Endothelial cell of umbilical vein (primary cell): ENCODE measurements at regions of chr1 and their contacts with region 1.

Region 1: GRCh38 chr1:145891587-145892485 is 6.2 kb upstream of the ANKRD35 start:
- DNase-seq: peak; percentile 99
- H3K4me3 ChIP-seq: peak overlapping the region in 1 of 3 experiments; percentile 6
- H3K27ac ChIP-seq: peak overlapping the region; percentile 95
- H3K4me1 ChIP-seq: peaks cover 31% of the 10 kb centered on the region
- H3K27me3 ChIP-seq: no peaks in the 10 kb centered on the region
- CTCF ChIP-seq: peak; percentile 91 to 99
- POLR2A ChIP-seq: peak; percentile 71

Region 2: DNA sequence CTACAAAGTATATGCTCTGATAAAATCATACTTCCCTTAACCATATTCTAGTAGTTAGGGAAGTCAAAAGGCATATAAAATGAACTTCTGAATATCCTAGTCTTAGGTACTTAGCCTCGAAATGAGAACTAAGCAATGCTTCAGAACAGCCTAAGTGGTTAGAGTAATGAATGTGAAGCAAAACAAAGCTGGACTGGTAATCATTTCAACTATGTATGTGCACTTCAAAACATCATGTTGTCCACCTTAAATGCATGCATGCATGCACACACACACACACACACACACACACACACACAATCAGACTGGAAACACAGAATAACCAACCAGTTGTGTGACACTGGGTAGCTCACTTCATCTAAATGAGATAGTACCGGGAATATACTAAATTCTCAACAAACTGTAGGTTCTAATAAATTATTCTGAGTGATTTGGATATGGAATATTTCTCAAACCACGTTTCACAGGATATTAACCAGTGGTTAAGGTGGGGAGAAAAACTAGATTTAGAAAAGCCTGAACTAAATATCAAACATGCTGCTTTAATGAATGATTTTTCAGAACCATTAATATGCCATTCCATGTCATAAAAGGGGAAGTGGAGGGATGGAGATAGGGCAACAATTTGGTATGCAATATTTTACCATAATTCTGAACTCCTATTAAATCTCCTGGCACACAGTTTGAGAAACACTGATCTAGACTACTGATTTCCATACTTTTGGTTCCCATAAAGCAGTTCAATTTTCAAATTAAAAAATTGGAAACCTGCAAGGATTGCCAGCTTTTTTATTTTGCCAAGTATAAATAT is 87.4 kb before region 1 on chr1:
- CTCF ChIA-PET with region 1: no interaction called
- POLR2A ChIA-PET with region 1: no interaction called
- dilution Hi-C with region 1: no loop called
- intact Hi-C with region 1: no loop called
- DNase-seq: no peak
- H3K4me3 ChIP-seq: no peak overlapping the region
- H3K27ac ChIP-seq: no peak overlapping the region
- H3K4me1 ChIP-seq: no peaks in the 10 kb centered on the region
- H3K27me3 ChIP-seq: no peaks in the 10 kb centered on the region
- CTCF ChIP-seq: no peak
- POLR2A ChIP-seq: no peak

Region 3: DNA sequence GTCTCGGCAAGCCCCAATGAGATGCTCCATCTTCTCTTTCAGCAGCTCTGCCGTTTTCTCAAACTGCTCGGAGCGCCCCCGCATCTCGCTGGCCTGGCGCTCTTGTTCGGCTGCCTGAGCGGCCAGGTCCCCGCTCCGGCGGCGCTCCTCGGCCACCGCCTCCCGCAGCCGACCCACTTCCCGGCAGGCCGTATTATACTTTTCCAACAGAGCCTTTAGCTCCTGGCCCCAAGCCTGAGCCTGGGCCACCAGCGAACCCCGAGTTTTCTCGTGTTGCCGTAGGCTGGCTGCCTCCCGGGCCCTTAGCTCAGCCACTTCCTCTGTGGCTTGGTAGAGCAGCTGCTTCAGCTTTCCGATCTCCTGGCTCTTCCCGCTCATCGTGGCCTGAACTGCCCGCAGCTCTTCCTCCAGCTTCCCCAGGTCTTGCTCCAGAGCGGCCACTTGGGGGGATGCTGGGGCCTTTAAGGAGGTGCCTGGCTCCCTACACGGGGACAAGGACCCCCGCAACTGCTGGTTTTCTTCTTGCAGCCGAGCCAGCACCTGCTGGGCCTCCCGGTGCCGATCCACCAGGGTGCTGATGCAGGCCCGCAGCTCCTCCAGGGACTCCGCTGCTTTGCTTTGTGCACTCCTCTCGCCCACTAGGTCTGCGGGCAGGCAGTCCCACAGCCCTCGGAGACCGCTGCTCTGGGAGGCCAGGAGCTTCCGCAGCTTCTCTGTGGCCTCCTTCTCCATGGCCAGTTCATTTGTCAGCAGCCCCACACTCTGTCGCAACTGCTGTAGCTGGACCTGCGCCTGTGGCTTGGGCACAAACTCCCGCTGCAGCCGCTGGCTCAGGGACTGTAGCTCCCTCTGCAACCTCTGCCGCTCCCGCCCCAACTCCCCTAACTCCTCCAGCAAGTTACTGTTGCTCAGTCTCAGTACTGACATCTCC is 19.6 kb before region 1 on chr1:
- CTCF ChIA-PET with region 1: interaction called, 18 read pairs
- POLR2A ChIA-PET with region 1: interaction called, 3 read pairs
- dilution Hi-C with region 1: no loop called
- intact Hi-C with region 1: no loop called
- DNase-seq: peak; percentile 37
- H3K4me3 ChIP-seq: peak overlapping the region in 1 of 3 experiments; percentile 35
- H3K27ac ChIP-seq: no peak overlapping the region
- H3K4me1 ChIP-seq: peaks cover 8% of the 10 kb centered on the region
- H3K27me3 ChIP-seq: peaks cover 0 to 3% of the 10 kb centered on the region in 2 experiments
- CTCF ChIP-seq: no peak
- POLR2A ChIP-seq: no peak

Region 4: DNA sequence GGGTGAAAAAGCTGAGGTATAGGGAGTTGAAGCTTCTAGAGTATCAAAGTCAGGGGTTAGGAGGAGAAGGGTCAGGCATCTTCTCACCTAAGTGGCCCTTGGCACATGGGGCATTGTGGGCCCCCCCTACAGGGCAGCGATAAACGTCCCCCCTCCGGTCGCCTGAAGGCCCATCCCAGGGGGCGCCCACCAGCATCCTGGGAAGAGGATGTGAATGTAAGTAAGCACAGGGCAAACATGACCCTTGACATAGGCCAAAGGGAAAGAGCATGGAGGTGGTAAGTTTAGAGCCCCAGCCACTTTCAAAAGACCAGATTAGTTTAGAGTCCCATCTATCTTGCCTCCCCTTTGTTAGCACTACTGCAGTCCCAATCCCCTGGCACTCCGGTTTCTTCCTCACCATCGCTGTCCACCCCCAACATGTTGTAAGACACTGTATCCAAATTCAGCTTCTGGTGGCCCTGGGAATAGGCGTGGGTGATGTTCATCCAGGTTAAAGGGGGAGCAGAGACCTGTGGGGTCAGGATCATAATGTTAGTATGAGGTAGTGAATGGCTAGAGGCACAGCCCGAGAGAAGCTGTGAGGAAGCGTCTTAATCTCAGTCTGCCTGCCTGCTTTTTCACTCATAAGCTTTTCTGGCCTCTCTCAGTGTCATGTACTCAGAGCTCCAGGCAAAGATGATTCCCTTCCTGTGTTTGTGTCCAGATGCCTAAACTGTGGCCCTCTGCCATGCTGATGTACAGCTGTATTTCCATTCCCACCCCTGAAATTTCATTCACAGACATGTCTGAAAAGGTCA is 15.3 kb after region 1 on chr1:
- CTCF ChIA-PET with region 1: interaction called, 280 read pairs
- POLR2A ChIA-PET with region 1: interaction called, 23 read pairs
- dilution Hi-C with region 1: no loop called
- intact Hi-C with region 1: loop called (anchors 1 kb)
- DNase-seq: peak; percentile 59
- H3K4me3 ChIP-seq: no peak overlapping the region
- H3K27ac ChIP-seq: peak overlapping the region; percentile 39
- H3K4me1 ChIP-seq: peaks cover 25% of the 10 kb centered on the region
- H3K27me3 ChIP-seq: no peaks in the 10 kb centered on the region
- CTCF ChIP-seq: no peak
- POLR2A ChIP-seq: no peak

Region 5: DNA sequence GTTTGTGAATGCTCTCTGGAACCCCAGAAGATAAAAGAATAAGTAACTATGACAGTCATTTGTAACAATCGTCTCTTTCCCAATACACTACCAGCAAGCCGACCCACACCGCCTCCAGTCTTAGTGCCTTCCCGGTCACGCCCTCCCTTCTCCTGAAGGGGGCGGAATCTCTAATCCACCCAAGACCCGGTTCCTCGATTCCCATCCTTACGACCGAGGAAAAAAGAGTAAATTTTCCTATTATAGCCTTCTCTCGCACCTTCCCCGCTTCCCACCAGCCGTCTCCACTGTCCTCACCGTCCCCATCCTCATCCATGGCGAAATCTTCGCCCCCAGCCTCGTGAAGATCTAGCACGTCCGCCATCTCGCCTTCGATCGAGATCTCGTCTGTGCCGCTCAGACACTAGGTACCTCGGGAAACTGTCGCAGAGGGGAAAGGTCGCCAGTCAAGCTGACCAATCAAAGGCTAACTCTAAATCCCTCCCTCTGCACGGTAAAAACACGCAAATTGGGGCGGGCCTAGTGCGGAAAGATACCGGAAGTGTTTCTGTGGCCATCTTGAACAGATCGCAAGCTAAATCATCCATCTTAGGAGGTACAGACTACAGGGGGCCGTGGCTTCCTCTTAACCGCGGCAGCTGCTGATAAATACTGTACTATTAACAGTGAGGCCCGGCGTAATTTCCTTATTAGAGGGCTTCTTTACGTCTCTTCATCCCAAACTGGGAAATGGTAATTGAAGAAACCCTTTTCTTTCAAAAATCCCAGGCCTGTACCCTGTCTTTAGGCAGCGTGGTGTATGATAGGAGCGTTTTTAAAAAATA is 35.4 kb after region 1 on chr1 and contains the start of gene RBM8A:
- CTCF ChIA-PET with region 1: interaction called, 23 read pairs
- POLR2A ChIA-PET with region 1: interaction called, 3 read pairs
- dilution Hi-C with region 1: no loop called
- intact Hi-C with region 1: loop called (anchors 5 kb)
- DNase-seq: peak; percentile 99
- H3K4me3 ChIP-seq: peak within 1 kb of the TSS; percentile 80 to 89 (median 80)
- H3K27ac ChIP-seq: peak within 1 kb of the TSS; percentile 94
- H3K4me1 ChIP-seq: peaks cover 8% of the 10 kb centered on the region
- H3K27me3 ChIP-seq: no peaks in the 10 kb centered on the region
- CTCF ChIP-seq: peak; percentile 64 to 70
- POLR2A ChIP-seq: peak; percentile 88
- total RNA-seq, gene RBM8A: 194 and 200 TPM in 2 replicates

Region 6: DNA sequence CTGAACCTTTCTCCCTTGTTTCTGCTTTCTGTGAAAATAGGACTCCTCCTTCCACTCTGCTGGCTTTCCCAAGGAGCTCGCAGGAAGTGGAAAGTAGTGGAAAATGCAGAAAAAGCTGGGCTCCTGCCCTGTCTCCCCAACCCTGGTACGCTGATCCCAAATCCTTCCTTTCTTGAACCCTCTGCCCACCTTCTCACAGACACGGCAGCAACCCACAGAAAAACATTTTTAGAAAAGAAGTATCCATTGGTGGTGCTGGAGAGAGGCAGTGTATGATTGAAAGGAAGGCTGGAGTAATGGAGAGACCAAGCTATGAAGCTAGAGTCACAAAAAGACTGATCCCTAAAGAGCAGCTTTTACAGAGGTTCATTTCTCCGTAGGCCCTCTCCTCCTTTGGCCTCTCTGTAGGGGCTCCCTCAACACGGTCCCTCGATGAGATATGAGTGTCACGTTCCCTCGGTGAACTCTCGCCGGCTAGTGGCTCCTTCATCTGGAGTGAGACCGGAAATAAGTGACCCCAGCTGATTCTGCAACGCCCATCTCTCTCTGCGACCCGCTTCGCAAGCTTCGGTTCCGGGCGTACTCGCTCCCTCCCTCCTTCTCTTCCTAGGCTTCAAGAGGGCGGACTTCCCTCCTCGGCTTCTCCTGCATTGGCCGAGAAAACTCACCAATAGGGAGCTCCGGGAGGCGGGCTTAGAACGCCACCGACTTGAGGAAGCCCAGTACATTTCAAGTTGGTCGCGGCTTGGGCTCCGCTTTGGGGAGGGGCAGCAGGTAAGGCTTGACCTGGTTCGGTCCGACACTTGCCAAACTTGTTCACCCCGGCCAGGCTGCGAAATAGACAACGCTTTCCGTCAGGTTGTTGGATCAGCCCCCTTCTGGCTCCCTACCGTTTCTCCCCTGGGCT is 72.4 kb after region 1 on chr1 and contains the starts of genes ANKRD34A and POLR3GL:
- CTCF ChIA-PET with region 1: interaction called, 23 read pairs
- POLR2A ChIA-PET with region 1: no interaction called
- dilution Hi-C with region 1: no loop called
- intact Hi-C with region 1: no loop called
- DNase-seq: peak; percentile 96
- H3K4me3 ChIP-seq: peak within 1 kb of the TSS; percentile 38 to 77 (median 60)
- H3K27ac ChIP-seq: peak within 1 kb of the TSS; percentile 43
- H3K4me1 ChIP-seq: peaks cover 34% of the 10 kb centered on the region
- H3K27me3 ChIP-seq: no peaks in the 10 kb centered on the region
- CTCF ChIP-seq: no peak
- POLR2A ChIP-seq: peak; percentile 82
- total RNA-seq, gene ANKRD34A: 0.24 and 0.60 TPM in 2 replicates
- total RNA-seq, gene POLR3GL: 15.3 and 18.8 TPM in 2 replicates

Region 7: GRCh38 chr1:146007506-146008133 is 115.8 kb after region 1 on chr1:
- CTCF ChIA-PET with region 1: interaction called, 32 read pairs
- POLR2A ChIA-PET with region 1: no interaction called
- dilution Hi-C with region 1: no loop called
- intact Hi-C with region 1: loop called (anchors 1 kb)
- DNase-seq: no peak
- H3K4me3 ChIP-seq: no peak overlapping the region
- H3K27ac ChIP-seq: no peak overlapping the region
- H3K4me1 ChIP-seq: peaks cover 4% of the 10 kb centered on the region
- H3K27me3 ChIP-seq: no peaks in the 10 kb centered on the region
- CTCF ChIP-seq: no peak
- POLR2A ChIP-seq: no peak